ENCODE measurements at regions of chr2 and their contacts with region 1.

Region 1: DNA sequence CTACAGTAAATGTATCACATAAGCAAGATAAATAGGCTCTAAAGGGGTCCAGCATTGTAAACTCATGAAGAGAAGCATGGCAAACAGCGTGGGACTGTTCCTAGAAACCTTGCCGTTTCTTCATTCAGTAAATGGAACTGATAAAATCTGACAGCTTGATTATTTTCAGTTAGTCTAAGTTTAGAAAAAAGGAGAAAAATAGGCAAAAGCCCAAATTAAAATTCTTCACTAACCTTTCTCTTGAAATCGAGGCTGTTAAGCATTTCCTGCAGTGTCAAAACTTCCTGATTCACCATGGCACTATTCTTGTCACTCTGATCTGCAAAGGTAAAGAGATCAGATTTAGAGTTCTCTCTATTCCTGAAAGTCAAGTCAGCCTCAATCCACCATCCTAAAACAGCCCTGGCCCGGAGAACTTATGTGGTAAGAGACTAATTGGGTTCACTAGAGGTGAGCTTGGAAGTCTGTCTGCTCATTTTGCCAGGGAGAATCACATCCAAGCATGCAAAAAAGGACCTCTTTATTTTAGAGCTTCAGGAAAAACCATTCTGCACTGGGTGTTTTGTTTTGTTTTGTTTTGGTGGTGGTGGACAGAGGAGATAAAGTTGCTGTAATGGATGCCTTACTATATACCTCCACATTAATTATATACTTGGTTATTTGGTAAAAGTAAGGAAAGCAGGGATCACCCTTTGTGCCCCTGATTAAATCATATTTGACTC is 52.4 kb upstream of the STAT1 start:
- DNase-seq: peak in 2 of 14 experiments; percentile 25 to 49
- ATAC-seq: peak; percentile 30
- H3K4me3 ChIP-seq: peak overlapping the region; percentile 3
- H3K4me3 Mint-ChIP-seq: peak overlapping the region; percentile 73
- H3K27ac ChIP-seq: peak overlapping the region; percentile 14 to 42
- H3K27ac Mint-ChIP-seq: peak overlapping the region; percentile 85
- H3K4me1 ChIP-seq: peaks cover 26% of the 10 kb centered on the region
- H3K4me1 Mint-ChIP-seq: peaks cover 81% of the 10 kb centered on the region
- H3K27me3 ChIP-seq: no peaks in the 10 kb centered on the region
- H3K27me3 Mint-ChIP-seq: no peaks in the 10 kb centered on the region
- CTCF ChIP-seq: no peak

Region 2: DNA sequence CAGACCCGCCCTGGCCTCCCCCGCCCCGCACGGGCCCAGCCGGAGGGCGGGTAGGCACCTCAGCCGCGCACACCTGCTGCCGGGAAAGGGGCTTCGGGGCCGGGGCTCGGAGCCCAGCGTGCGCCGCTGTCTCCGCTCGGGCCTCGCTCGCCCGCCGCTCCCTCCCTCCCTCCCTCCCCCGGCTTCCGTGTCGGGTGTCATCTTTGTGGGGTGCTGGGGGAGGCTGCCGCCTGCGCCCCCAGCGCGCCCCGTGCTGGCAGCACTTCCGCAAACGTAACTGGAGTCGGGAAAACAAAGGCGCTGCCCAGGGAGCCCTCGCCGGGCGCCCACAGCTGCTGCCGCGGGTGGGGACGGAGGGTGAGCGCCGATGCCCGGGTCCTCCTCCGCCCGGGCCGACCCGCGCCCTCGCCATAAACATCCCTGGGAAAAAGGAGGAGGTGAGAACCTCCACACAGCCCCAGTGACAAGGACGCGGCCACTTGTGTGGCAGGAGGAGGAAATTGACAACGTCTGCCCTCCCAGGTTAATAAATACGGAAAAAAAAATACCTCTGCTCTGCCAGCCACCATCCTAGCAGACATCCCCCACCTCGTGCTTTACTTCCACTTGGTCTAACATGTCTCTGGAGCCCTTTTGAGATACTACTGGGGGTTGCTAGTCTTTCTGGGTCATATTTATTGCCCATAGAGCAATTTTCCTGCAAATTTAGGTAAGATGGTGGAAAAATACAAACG is 657.7 kb before region 1 on chr2:
- CTCF ChIA-PET with region 1: no interaction called
- POLR2A ChIA-PET with region 1: no interaction called
- intact Hi-C with region 1: no loop called
- DNase-seq: peak; percentile 61 to 91 (median 72)
- ATAC-seq: peak; percentile 49
- H3K4me3 ChIP-seq: peak overlapping the region; percentile 79
- H3K4me3 Mint-ChIP-seq: peak overlapping the region; percentile 94
- H3K27ac ChIP-seq: peak overlapping the region; percentile 95 to 99
- H3K27ac Mint-ChIP-seq: peak overlapping the region; percentile 97
- H3K4me1 ChIP-seq: peaks cover 40% of the 10 kb centered on the region
- H3K4me1 Mint-ChIP-seq: peaks cover 45% of the 10 kb centered on the region
- H3K27me3 ChIP-seq: no peaks in the 10 kb centered on the region
- H3K27me3 Mint-ChIP-seq: no peaks in the 10 kb centered on the region
- CTCF ChIP-seq: no peak

Region 3: DNA sequence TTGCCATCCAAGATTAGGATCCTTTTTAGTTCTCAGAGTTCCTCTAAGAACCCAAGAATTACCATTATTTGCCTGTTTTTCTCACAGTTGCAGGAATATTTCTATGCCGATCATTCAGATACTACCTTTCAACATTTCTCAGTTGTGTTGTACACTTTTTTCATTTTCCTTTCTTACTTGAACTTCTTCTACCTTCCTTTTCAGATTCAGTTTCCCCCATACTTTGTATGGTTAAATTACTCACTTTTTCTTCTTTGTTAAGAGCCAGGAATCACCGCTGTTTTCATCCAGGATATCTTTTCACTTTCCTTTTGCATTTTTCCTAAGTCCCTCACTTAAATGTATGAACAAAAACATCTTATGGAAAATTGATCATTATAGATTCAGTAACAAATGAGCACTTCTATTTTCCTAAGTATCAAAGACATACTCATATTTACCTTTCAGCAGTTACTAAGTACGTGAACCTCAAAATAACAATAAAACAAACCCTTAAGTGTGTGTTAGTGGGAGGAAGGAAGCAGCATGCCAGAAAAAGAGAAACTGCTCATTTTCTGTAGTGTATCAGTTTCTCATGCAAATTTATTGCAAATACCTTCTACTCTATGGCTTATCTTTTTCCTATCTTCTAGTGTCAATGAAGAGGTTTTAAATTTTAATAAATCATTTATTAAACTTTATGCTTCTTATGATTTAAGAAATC is 12.0 kb after region 1 on chr2:
- CTCF ChIA-PET with region 1: interaction called, 10 read pairs
- POLR2A ChIA-PET with region 1: no interaction called
- intact Hi-C with region 1: no loop called
- DNase-seq: no peak
- ATAC-seq: no peak
- H3K4me3 ChIP-seq: no peak overlapping the region
- H3K4me3 Mint-ChIP-seq: no peak overlapping the region
- H3K27ac ChIP-seq: no peak overlapping the region
- H3K27ac Mint-ChIP-seq: peak overlapping the region; percentile 50
- H3K4me1 ChIP-seq: no peaks in the 10 kb centered on the region
- H3K4me1 Mint-ChIP-seq: peaks cover 20% of the 10 kb centered on the region
- H3K27me3 ChIP-seq: no peaks in the 10 kb centered on the region
- H3K27me3 Mint-ChIP-seq: no peaks in the 10 kb centered on the region
- CTCF ChIP-seq: no peak

Measured in CD4-positive, alpha-beta T cell (primary cell).